CD8-positive, alpha-beta memory T cell (primary cell): ENCODE measurements at regions of chr11 and their contacts with region 1.

Region 1: DNA sequence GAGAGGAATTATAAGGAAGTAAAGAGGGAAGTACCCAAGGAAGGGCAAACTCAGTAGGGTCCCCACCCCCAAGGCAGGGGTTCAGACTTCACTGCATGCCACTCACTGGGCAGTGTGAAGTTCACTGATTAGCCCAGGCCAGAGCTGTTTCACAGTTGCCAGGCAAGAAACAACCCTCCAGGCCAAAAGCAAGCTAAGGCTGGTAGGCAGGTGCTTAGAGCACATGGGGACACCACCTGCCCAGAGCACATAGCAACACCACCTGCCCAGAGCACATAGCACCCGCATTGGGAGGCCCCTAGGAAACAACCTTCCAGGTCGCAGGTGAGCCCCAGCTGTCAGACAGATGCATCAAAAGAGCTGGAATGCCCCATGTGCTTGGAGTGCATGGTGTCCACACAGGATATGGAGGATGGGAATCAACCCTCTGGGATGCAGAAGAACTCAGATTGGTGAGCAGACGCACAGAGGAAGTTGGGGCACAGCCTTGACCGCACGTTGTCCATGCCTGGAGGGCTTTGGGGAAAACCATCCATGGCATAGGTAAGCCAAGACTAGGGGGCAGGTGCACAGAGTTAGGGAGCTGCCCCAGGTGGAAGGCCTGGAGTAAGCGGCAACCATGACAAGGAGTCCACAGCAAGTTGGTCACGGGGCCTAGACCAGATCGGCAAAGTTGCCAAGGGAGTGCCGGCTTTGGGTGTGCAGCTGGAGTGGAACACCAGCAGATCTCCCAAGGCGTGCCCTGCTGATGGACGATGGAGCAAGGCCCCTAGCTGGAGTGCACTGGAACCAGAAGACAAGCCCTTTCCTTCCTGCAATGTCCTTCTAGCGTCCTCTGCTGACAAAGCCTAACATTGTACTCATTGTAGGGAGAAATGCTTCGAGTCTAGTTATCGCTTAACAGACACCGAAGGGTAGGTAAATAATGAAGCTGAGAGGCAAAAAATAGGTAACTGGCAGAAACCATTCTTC is 7.8 kb upstream of the TMEM216 start:
- DNase-seq: no peak
- H3K4me3 ChIP-seq: no peak overlapping the region
- H3K4me3 Mint-ChIP-seq: peak overlapping the region in 1 of 7 donors; percentile 44
- H3K27ac ChIP-seq: no peak overlapping the region
- H3K27ac Mint-ChIP-seq: no peak overlapping the region
- H3K4me1 ChIP-seq: peaks cover 6% of the 10 kb centered on the region
- H3K4me1 Mint-ChIP-seq: peaks cover 6 to 8% (median 7%) of the 10 kb centered on the region in 3 donors
- H3K27me3 ChIP-seq: no peaks in the 10 kb centered on the region
- H3K27me3 Mint-ChIP-seq: no peaks in the 10 kb centered on the region

Region 2: GRCh38 chr11:61254403-61255025 is 130.0 kb before region 1 on chr11:
- CTCF ChIA-PET with region 1: interaction called, 14 read pairs
- POLR2A ChIA-PET with region 1: no interaction called
- DNase-seq: peak; percentile 25 to 62 (median 38)
- H3K4me3 ChIP-seq: no peak overlapping the region
- H3K4me3 Mint-ChIP-seq: no peak overlapping the region
- H3K27ac ChIP-seq: no peak overlapping the region
- H3K27ac Mint-ChIP-seq: no peak overlapping the region
- H3K4me1 ChIP-seq: no peaks in the 10 kb centered on the region
- H3K4me1 Mint-ChIP-seq: no peaks in the 10 kb centered on the region
- H3K27me3 ChIP-seq: no peaks in the 10 kb centered on the region
- H3K27me3 Mint-ChIP-seq: peaks cover 0 to 5% of the 10 kb centered on the region in 2 donors

Region 3: DNA sequence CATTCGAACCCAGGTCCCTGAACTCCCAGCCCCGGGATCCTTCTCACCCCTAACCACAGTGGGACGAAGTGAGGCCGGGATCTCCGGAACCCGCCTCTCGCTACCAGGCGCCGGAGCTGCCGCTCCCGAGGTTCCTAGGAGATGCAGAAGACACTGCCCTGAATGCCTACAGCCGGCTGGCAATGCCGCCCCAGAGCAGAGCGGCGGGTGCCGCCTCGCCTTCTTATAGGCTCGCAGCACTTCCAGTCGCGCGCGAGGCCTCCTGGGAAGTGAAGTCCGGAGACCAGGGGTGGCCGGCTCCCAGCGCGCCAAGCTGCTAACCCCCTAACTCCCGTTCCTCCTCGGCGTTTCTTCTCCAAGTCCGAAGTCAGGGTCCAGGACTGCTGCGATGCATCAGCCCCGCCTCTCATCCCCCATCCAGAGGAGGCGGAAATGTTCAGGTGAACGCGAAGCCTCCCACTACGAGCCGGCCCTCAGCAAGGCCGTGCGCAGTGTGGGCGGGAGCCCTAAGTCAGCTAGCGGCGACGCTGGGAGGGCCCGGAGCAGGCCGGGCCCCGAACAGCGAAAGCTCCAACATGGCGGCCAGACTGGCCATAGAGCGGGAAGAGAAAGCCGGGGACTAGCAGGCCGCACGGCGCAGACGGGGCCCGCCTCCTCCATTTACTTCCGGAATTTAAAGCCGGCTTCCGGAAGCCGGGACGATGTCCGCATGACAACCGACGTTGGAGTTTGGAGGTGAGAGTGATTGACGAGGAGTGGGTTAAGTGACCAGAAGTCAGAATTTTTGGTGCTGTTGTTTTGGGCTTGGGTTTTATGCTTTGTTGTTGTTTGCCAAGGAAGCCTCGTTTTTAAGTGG is 22.6 kb before region 1 on chr11 and contains the starts of genes CYB561A3 and TMEM138:
- CTCF ChIA-PET with region 1: interaction called, 31 read pairs
- POLR2A ChIA-PET with region 1: interaction called, 7 read pairs
- DNase-seq: peak; percentile 79 to 92 (median 84)
- H3K4me3 ChIP-seq: peak within 1 kb of the TSS; percentile 91
- H3K4me3 Mint-ChIP-seq: peak within 1 kb of the TSS; percentile 95 to 99 (median 96)
- H3K27ac ChIP-seq: peak within 1 kb of the TSS; percentile 88
- H3K27ac Mint-ChIP-seq: peak within 1 kb of the TSS; percentile 91 to 100 (median 98)
- H3K4me1 ChIP-seq: peaks cover 29% of the 10 kb centered on the region
- H3K4me1 Mint-ChIP-seq: peaks cover 29 to 44% (median 39%) of the 10 kb centered on the region in 3 donors
- H3K27me3 ChIP-seq: no peaks in the 10 kb centered on the region
- H3K27me3 Mint-ChIP-seq: no peaks in the 10 kb centered on the region
- total RNA-seq, gene CYB561A3: 53.0 to 53.7 TPM
- total RNA-seq, gene TMEM138: 74.4 to 75.1 TPM

Region 4: GRCh38 chr11:61370331-61371005 is 14.1 kb before region 1 on chr11:
- CTCF ChIA-PET with region 1: interaction called, 20 read pairs
- POLR2A ChIA-PET with region 1: no interaction called
- DNase-seq: no peak
- H3K4me3 ChIP-seq: no peak overlapping the region
- H3K4me3 Mint-ChIP-seq: no peak overlapping the region
- H3K27ac ChIP-seq: no peak overlapping the region
- H3K27ac Mint-ChIP-seq: peak overlapping the region in 3 of 8 donors; percentile 1 to 61 (median 14)
- H3K4me1 ChIP-seq: no peaks in the 10 kb centered on the region
- H3K4me1 Mint-ChIP-seq: no peaks in the 10 kb centered on the region
- H3K27me3 ChIP-seq: no peaks in the 10 kb centered on the region
- H3K27me3 Mint-ChIP-seq: no peaks in the 10 kb centered on the region

Region 5: DNA sequence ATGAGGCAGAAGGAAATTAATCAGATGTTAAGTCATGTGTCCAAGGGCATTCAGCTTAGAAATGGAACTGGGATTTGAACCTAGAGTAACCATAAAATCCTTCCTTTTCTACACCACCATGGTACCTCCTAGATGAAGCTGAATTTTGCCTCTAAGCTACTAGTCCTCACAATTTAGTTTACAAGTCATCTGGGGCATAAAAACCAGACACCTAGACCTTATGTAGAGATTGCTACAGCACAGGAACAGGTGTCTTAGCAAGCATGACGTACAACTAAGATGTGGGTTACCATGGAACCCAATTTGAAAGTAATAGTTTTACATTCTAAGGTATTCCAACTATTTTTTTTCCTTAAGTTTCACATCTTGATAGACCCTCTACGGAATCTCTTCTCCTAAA is 17.0 kb after region 1 on chr11:
- CTCF ChIA-PET with region 1: interaction called, 21 read pairs
- POLR2A ChIA-PET with region 1: interaction called, 8 read pairs
- DNase-seq: no peak
- H3K4me3 ChIP-seq: no peak overlapping the region
- H3K4me3 Mint-ChIP-seq: no peak overlapping the region
- H3K27ac ChIP-seq: no peak overlapping the region
- H3K27ac Mint-ChIP-seq: peak overlapping the region in 3 of 8 donors; percentile 2 to 52 (median 35)
- H3K4me1 ChIP-seq: no peaks in the 10 kb centered on the region
- H3K4me1 Mint-ChIP-seq: no peaks in the 10 kb centered on the region
- H3K27me3 ChIP-seq: no peaks in the 10 kb centered on the region
- H3K27me3 Mint-ChIP-seq: peaks cover 0 to 2% of the 10 kb centered on the region in 2 donors

Region 6: GRCh38 chr11:61429691-61430582 is 45.4 kb after region 1 on chr11 and contains the starts of genes CPSF7 and SDHAF2:
- CTCF ChIA-PET with region 1: interaction called, 12 read pairs
- POLR2A ChIA-PET with region 1: no interaction called
- DNase-seq: peak; percentile 97 to 98 (median 97)
- H3K4me3 ChIP-seq: peak within 1 kb of the TSS; percentile 93
- H3K4me3 Mint-ChIP-seq: peak within 1 kb of the TSS; percentile 91 to 100 (median 97)
- H3K27ac ChIP-seq: peak within 1 kb of the TSS; percentile 97
- H3K27ac Mint-ChIP-seq: peak within 1 kb of the TSS; percentile 97 to 100 (median 99)
- H3K4me1 ChIP-seq: peaks cover 52% of the 10 kb centered on the region
- H3K4me1 Mint-ChIP-seq: peaks cover 58 to 81% (median 77%) of the 10 kb centered on the region in 3 donors
- H3K27me3 ChIP-seq: no peaks in the 10 kb centered on the region
- H3K27me3 Mint-ChIP-seq: peaks cover 0 to 7% of the 10 kb centered on the region in 2 donors
- total RNA-seq, gene CPSF7: 128 to 140 TPM
- total RNA-seq, gene SDHAF2: 48.8 to 49.2 TPM